ENCODE measurements at regions of chr1 and their contacts with region 1.

Region 1: GRCh38 chr1:205658943-205659581 is 21.2 kb downstream of the SLC45A3 start:
- DNase-seq: peak; percentile 84 to 91 (median 87)
- H3K4me3 ChIP-seq: peak overlapping the region in 6 of 59 donors; percentile 0 to 25 (median 17)
- H3K27ac ChIP-seq: peak overlapping the region in 54 of 59 donors; percentile 5 to 100 (median 67)
- H3K27me3 ChIP-seq: no peaks in the 10 kb centered on the region
- CTCF ChIP-seq: peak; percentile 56 to 99 (median 95)

Region 2: GRCh38 chr1:205626216-205626615 is 32.8 kb before region 1 on chr1:
- intact Hi-C with region 1: no loop called
- DNase-seq: no peak
- H3K4me3 ChIP-seq: no peak overlapping the region
- H3K27ac ChIP-seq: peak overlapping the region in 4 of 59 donors; percentile 17 to 33 (median 24)
- H3K27me3 ChIP-seq: no peaks in the 10 kb centered on the region
- CTCF ChIP-seq: no peak

Region 3: GRCh38 chr1:205680073-205680851 is 21.2 kb after region 1 on chr1 and contains the start of gene SLC45A3:
- intact Hi-C with region 1: loop called in 1 of 2 experiments (anchors 2 kb)
- DNase-seq: peak in 4 of 10 donors; percentile 48 to 66 (median 58)
- H3K4me3 ChIP-seq: peak within 1 kb of the TSS; percentile 49 to 86 (median 74)
- H3K27ac ChIP-seq: peak within 1 kb of the TSS; percentile 40 to 100 (median 97)
- H3K27me3 ChIP-seq: no peaks in the 10 kb centered on the region
- CTCF ChIP-seq: peak in 7 of 56 donors; percentile 3 to 28 (median 16)
- total RNA-seq, gene SLC45A3: 2.2 to 82.8 (median 15.0) TPM

Region 4: GRCh38 chr1:205711104-205712020 is 52.3 kb after region 1 on chr1:
- intact Hi-C with region 1: loop called (anchors 1 to 2 kb)
- DNase-seq: peak in 4 of 10 donors; percentile 59 to 88 (median 73)
- H3K4me3 ChIP-seq: no peak overlapping the region
- H3K27ac ChIP-seq: peak overlapping the region in 53 of 59 donors; percentile 5 to 78 (median 52)
- H3K27me3 ChIP-seq: no peaks in the 10 kb centered on the region
- CTCF ChIP-seq: peak; percentile 85 to 99 (median 93)